HepG2 (cell line): ENCODE measurements at regions of chr20 and their contacts with region 1.

Region 1: GRCh38 chr20:57596998-57597939 is 23.0 kb downstream of the ZBP1 start:
- DNase-seq: peak; percentile 43
- ATAC-seq: peak; percentile 75
- H3K4me3 ChIP-seq: peak overlapping the region in 1 of 3 experiments; percentile 27; a peak in 1 of 6 replicates
- H3K27ac ChIP-seq: no peak overlapping the region
- H3K4me1 ChIP-seq: peaks cover 25% of the 10 kb centered on the region
- H3K27me3 ChIP-seq: peaks cover 0 to 36% of the 10 kb centered on the region in 2 experiments; a peak in 4 of 5 replicates
- CTCF ChIP-seq: peak; percentile 98
- EP300 ChIP-seq: 0 out of 4 replicates have a peak, but pooled peaks of 1 of the 2 experiments have one; percentile 16
- POLR2A ChIP-seq: no peak
- RAD21 ChIP-seq: peak; percentile 97

Region 2: GRCh38 chr20:57514273-57514751 is 83.0 kb before region 1 on chr20:
- CTCF ChIA-PET with region 1: interaction called, 204 read pairs
- POLR2A ChIA-PET with region 1: no interaction called
- in situ Hi-C with region 1: loop called (anchors 5 kb)
- intact Hi-C with region 1: loop called (anchors 1 kb)
- DNase-seq: peak; percentile 73
- ATAC-seq: peak; percentile 87
- H3K4me3 ChIP-seq: no peak overlapping the region
- H3K27ac ChIP-seq: no peak overlapping the region
- H3K4me1 ChIP-seq: 0 out of 2 replicates have a peak, but pooled peaks cover 4% of the 10 kb centered on the region
- H3K27me3 ChIP-seq: peaks cover 0 to 43% of the 10 kb centered on the region in 2 experiments; a peak in 3 of 5 replicates
- CTCF ChIP-seq: peak; percentile 95
- EP300 ChIP-seq: no peak
- POLR2A ChIP-seq: no peak
- RAD21 ChIP-seq: peak; percentile 98